ENCODE measurements at regions of chr4 and their contacts with region 1.

Region 1: GRCh38 chr4:4248029-4248884 is at the start of gene TMEM128:
- DNase-seq: peak; percentile 88
- H3K4me3 Mint-ChIP-seq: peak within 1 kb of the TSS; percentile 94
- H3K27ac Mint-ChIP-seq: peak within 1 kb of the TSS; percentile 94
- H3K4me1 Mint-ChIP-seq: peaks cover 20% of the 10 kb centered on the region
- H3K27me3 Mint-ChIP-seq: no peaks in the 10 kb centered on the region
- total RNA-seq, gene TMEM128: 17.6 and 18.5 TPM in 2 replicates

Region 2: DNA sequence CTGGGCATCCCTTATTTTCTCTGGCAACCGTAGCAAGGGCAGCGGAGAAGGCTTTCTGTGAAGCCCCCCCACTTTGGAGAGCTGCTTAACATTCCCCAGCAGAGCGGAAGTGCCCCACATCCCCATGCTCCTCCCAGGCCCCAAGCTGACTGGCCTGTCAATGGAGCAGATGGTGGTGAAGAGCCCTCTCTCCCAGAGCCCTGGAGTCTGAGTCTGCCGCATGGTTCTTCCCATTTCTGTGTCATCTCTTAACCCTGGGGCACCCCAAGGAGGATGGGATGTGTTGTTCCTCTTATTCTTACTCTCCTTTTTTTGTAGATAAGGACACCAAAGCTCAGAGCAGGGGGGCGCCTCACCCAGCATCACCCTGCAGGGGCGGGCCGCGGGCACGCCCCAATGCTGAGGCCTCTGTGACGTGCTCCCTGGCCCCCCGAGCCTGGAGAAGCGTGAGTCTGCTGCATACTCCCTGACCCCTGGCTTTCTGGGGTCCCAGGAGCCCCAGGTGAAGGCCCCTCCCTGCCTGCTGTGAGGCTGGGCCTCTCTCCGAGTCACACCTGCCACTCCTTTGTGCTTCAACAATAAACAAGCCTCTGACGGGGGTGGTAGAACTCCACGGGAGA is 446.2 kb before region 1 on chr4:
- intact Hi-C with region 1: no loop called
- DNase-seq: no peak
- H3K4me3 Mint-ChIP-seq: no peak overlapping the region
- H3K27ac Mint-ChIP-seq: no peak overlapping the region
- H3K4me1 Mint-ChIP-seq: no peaks in the 10 kb centered on the region
- H3K27me3 Mint-ChIP-seq: no peaks in the 10 kb centered on the region

Region 3: GRCh38 chr4:4289941-4290850 is 41.9 kb after region 1 on chr4 and contains the starts of genes LYAR and ZBTB49:
- intact Hi-C with region 1: loop called (anchors 1 kb)
- DNase-seq: peak; percentile 96
- H3K4me3 Mint-ChIP-seq: peak within 1 kb of the TSS; percentile 96
- H3K27ac Mint-ChIP-seq: peak within 1 kb of the TSS; percentile 87
- H3K4me1 Mint-ChIP-seq: peaks cover 27% of the 10 kb centered on the region
- H3K27me3 Mint-ChIP-seq: no peaks in the 10 kb centered on the region
- total RNA-seq, gene LYAR: 61.6 and 61.7 TPM in 2 replicates
- total RNA-seq, gene ZBTB49: 6.7 and 8.3 TPM in 2 replicates

Region 4: GRCh38 chr4:4334798-4335520 is 86.7 kb after region 1 on chr4:
- intact Hi-C with region 1: loop called (anchors 1 kb)
- DNase-seq: peak; percentile 59
- H3K4me3 Mint-ChIP-seq: no peak overlapping the region
- H3K27ac Mint-ChIP-seq: no peak overlapping the region
- H3K4me1 Mint-ChIP-seq: peaks cover 4% of the 10 kb centered on the region
- H3K27me3 Mint-ChIP-seq: no peaks in the 10 kb centered on the region

Measured in activated T-helper 2 cell treated with anti-CD3 and anti-CD28 coated beads, Interferon-gamma antibody, Interleukin-2, Interleukin-4, amounts not matched to agents 10 μg/mL and 5 μg/mL and 100 μg/mL, durations not matched to agents 14 hours and 24 hours and 36 hours (primary cell).